ENCODE measurements at regions of chr9 and their contacts with region 1.

Region 1: GRCh38 chr9:89844535-89844934 is 239.7 kb downstream of the GADD45G start:
- DNase-seq: no peak
- H3K4me3 ChIP-seq: no peak overlapping the region
- H3K27ac ChIP-seq: no peak overlapping the region
- H3K4me1 ChIP-seq: peaks cover 0 to 31% (median 5%) of the 10 kb centered on the region in 4 donors
- H3K27me3 ChIP-seq: no peaks in the 10 kb centered on the region
- CTCF ChIP-seq: no peak
- EP300 ChIP-seq: no peak
- POLR2A ChIP-seq: no peak

Region 2: GRCh38 chr9:88949425-88949824 is 895.1 kb before region 1 on chr9:
- in situ Hi-C with region 1: no loop called
- intact Hi-C with region 1: no loop called
- DNase-seq: no peak
- H3K4me3 ChIP-seq: no peak overlapping the region
- H3K27ac ChIP-seq: peak overlapping the region in 3 of 4 donors; percentile 5 to 73 (median 41)
- H3K4me1 ChIP-seq: peaks cover 3 to 9% (median 4%) of the 10 kb centered on the region in 4 donors
- H3K27me3 ChIP-seq: no peaks in the 10 kb centered on the region
- CTCF ChIP-seq: no peak
- EP300 ChIP-seq: peak; percentile 46
- POLR2A ChIP-seq: no peak

Region 3: GRCh38 chr9:89686095-89686494 is 158.4 kb before region 1 on chr9:
- in situ Hi-C with region 1: no loop called
- intact Hi-C with region 1: loop called (anchors 10 kb)
- DNase-seq: no peak
- H3K4me3 ChIP-seq: no peak overlapping the region
- H3K27ac ChIP-seq: no peak overlapping the region
- H3K4me1 ChIP-seq: peaks cover 0 to 5% (median 0%) of the 10 kb centered on the region in 4 donors
- H3K27me3 ChIP-seq: no peaks in the 10 kb centered on the region
- CTCF ChIP-seq: no peak
- EP300 ChIP-seq: no peak
- POLR2A ChIP-seq: no peak

Region 4: DNA sequence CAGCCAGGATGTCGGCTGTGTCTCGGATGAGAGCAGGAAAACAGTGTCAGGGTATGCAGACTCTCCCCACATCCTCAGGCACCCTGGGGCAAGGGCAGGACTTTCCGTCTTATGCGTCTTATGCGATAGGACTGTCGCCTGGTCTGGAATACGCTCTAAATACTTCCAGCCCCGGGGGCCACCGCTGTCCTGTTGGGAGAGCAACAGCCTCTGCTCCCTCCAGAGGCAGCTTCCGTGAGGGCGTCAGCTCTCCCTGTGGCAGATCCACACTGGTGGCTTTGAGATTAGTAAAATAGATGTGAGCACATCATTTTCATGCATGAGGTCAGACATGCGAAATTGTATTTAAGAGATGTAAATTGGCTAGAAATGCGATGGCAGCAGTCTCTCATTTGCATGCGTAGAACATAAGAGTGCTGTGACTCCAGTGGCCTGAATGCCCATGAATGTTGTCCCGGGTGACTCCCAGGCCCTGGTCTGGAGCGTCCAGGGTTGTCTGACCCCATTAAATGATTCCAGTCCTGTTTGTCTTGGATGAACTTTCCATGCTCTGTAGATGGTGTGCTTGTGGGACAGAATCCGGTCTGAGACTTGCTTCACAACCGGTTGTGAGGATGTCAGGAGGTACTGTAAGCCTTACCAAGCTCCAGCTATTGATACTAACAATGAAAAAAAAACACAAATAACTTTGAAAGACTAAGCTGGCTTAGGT is 1185.3 kb after region 1 on chr9:
- in situ Hi-C with region 1: no loop called
- intact Hi-C with region 1: no loop called
- DNase-seq: no peak
- H3K4me3 ChIP-seq: no peak overlapping the region
- H3K27ac ChIP-seq: no peak overlapping the region
- H3K4me1 ChIP-seq: no peaks in the 10 kb centered on the region
- H3K27me3 ChIP-seq: no peaks in the 10 kb centered on the region
- CTCF ChIP-seq: no peak
- EP300 ChIP-seq: no peak
- POLR2A ChIP-seq: no peak